BJ (cell line): ENCODE measurements at regions of chr22 and their contacts with region 1.

Region 1: DNA sequence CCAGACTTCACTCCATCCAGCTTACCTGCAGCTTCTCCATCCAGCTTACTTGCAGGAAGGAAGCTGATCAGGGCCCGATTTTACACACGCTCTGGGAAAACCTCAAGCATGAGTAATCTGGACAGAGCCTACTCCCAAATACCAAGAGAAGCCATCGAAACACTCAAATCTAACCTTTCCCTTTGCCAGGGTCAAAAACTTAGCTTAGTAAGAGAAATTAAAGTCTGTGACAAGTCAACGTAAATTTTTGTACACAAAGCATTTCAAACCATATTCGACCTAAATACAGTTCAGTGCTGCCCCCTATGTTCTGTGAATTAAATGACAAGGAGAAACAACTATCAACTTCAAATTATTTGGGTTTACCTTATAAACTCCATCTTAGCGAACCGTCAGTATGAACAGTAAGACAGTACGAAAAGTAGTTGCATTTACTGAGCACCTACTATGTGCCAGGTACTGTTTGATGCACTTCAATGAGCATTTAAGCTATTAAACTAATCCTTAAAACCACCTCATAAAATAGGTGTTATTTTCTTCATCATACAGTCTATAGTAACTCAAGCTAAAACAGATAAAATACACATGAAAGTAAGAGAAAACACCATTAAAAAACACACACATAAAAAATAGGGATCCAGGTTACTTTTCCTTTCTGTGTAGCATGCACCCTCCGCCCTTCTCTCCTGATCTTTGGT is 36.9 kb downstream of the ARFGAP3 start:
- DNase-seq: peak; percentile 82
- H3K4me3 ChIP-seq: no peak overlapping the region
- H3K27me3 ChIP-seq: no peaks in the 10 kb centered on the region
- CTCF ChIP-seq: peak; percentile 53

Region 2: GRCh38 chr22:42662114-42663021 is 157.8 kb before region 1 on chr22:
- CTCF ChIA-PET with region 1: interaction called, 13 read pairs
- POLR2A ChIA-PET with region 1: no interaction called
- DNase-seq: no peak
- H3K4me3 ChIP-seq: peak overlapping the region; percentile 64
- H3K27me3 ChIP-seq: no peaks in the 10 kb centered on the region
- CTCF ChIP-seq: peak; percentile 91

Region 3: GRCh38 chr22:42791721-42792420 is 28.3 kb before region 1 on chr22:
- CTCF ChIA-PET with region 1: interaction called, 10 read pairs
- POLR2A ChIA-PET with region 1: no interaction called
- DNase-seq: no peak
- H3K4me3 ChIP-seq: no peak overlapping the region
- H3K27me3 ChIP-seq: no peaks in the 10 kb centered on the region
- CTCF ChIP-seq: no peak

Region 4: GRCh38 chr22:42805016-42805997 is 14.9 kb before region 1 on chr22:
- CTCF ChIA-PET with region 1: interaction called, 10 read pairs
- POLR2A ChIA-PET with region 1: no interaction called
- DNase-seq: no peak
- H3K4me3 ChIP-seq: no peak overlapping the region
- H3K27me3 ChIP-seq: no peaks in the 10 kb centered on the region
- CTCF ChIP-seq: no peak

Region 5: DNA sequence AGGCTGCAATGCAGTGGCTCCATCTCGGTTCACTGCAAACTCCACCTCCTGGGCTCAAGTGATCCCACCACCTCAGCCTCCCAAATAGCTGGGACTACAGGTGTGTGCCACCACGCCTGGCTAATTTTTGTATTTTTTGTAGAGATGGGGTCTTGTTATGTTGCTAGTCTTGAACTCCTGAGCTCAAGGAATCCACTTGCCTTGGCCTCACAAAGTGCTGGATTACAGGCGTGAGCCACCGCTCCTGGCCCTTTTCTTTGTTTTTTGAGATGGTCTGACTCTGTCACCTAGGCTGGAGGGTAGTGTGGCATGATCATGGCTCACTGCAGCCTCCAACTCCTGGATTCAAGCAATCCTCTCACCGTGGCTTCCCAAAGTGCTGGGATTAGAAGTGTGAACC is 15.8 kb after region 1 on chr22:
- CTCF ChIA-PET with region 1: interaction called, 30 read pairs
- POLR2A ChIA-PET with region 1: no interaction called
- DNase-seq: no peak
- H3K4me3 ChIP-seq: no peak overlapping the region
- H3K27me3 ChIP-seq: no peaks in the 10 kb centered on the region
- CTCF ChIP-seq: no peak

Region 6: DNA sequence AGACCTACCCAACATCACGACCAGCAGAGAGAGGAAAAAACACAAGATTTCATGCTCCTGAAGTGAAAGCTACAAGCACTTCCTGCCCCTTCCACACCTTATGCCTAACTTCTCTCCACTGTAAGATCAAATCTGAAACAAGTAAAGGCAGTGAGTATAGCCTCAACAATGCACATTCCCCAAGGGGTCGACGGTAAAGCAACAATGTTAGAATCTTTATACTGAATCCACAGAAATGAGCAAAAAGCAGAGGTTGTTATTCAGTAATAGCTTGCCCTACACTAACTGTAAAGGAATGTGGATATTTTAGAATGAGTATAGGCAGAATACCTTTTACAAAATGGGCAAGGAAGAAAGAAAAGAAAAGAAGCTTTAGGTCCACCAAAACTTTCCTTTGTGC is 21.2 kb after region 1 on chr22:
- CTCF ChIA-PET with region 1: interaction called, 30 read pairs
- POLR2A ChIA-PET with region 1: no interaction called
- DNase-seq: no peak
- H3K4me3 ChIP-seq: no peak overlapping the region
- H3K27me3 ChIP-seq: no peaks in the 10 kb centered on the region
- CTCF ChIP-seq: no peak

Region 7: DNA sequence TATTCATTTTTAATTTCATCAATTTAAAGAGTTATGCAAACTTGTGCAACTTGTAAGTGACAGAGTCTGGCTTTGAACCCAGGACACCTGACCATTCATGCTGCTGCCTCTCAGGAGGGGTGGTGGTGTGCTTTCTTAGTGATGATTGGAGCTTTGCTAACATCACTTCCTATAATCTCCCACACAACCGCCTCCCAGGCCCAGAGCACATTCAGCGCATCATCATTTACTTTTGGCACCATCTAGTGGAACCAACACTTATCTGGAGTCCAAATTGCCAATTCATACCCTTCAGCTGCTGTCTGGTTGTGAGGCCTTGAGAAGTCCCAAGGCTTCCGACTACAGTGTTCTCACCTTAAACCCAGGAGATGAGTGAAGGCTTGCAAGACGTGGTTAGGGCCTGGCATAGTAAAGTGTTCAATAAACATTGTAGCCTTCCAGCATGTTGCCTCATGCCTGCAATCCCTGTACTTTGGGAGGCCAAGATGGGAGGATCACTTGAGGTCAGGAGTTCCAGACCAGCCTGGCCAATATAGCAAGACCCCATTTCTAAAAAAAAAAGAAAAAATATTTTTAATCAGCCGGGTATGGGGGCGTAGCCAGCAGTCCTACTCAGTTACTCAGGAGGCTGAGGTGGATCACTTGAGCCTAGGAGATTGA is 270.0 kb after region 1 on chr22:
- CTCF ChIA-PET with region 1: interaction called, 10 read pairs
- POLR2A ChIA-PET with region 1: interaction called, 3 read pairs
- DNase-seq: peak; percentile 58
- H3K4me3 ChIP-seq: no peak overlapping the region
- H3K27me3 ChIP-seq: no peaks in the 10 kb centered on the region
- CTCF ChIP-seq: peak; percentile 61